ENCODE measurements at regions of chr19 and their contacts with region 1.

Region 1: DNA sequence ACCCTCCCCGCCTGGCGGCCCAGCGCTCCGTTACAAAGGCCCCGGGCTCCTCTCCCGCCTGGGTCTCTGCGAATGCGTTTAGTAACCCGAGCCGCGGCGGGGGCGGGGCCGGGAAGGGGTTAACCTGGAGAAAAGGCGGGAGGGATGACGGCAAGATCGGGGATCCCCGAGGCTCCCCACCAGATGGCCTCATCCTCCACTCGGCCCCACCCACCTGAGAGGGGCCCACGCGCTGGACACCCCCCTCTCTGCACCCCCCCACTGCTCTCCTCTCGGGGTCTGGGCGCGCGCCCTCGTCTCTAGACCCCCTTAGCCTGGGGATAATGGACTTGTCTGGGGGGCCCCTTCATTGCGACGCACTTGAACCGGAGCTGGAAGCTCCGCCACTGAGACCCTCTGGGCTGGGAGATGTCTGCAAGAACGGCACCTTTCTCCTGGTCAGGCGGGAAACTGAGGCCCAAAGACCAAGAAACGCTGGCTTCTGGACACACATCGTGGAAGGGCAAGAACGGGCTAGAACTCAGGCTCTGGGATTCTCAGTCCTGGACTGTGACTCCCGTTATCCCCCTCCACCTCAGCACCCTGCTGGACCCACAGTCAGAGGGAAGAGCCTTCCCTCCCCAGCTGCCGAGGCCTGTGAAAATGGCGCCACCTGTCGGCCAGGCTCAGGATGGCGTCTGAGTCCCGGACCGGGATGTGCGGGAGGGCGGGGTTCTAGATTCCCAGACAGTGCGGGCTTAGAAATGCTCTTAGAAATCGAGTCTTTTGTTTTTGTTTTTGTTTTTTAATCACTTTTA is 2.9 kb upstream of the LTBP4 start:
- DNase-seq: peak; percentile 95

Region 2: GRCh38 chr19:40139533-40140287 is 458.6 kb before region 1 on chr19:
- intact Hi-C with region 1: loop called (anchors 5 kb)
- DNase-seq: no peak

Region 3: DNA sequence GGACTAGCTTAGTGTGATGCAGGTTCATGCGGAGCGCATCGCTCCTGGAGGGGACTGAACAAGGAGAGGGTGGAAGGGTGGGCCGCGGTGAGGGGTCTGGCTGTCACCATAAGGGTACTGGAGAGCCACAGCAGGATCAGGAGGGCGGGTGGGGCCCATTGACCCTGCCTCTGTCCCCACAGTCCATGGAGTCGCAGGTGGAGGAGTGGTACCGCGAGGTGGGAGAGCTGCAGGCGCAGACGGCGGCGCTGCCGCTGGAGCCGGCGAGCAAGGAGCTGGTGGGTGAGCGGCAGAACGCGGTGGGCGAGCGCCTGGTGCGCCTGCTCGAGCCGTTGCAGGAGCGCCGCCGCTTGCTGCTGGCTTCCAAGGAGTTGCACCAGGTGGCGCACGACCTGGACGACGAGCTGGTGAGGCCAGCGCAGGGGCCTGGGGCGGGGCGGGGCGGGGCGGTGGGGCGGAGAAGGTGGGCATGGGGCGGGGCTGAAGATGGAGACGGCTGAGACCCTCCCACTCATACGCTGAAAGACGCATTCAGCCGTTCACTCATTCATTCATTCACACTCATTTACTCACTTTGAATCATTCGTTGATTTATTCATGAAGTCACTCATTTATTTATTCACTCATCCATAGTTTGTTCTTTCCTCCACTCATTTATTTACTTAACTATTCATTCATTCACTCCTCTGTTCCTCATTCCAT is 49.2 kb before region 1 on chr19:
- intact Hi-C with region 1: no loop called
- DNase-seq: no peak